ENCODE measurements at regions of chr2 and their contacts with region 1.

Region 1: GRCh38 chr2:3633089-3633981 is 24.7 kb upstream of the ALLC start:
- DNase-seq: peak; percentile 81
- ATAC-seq: peak; percentile 49
- H3K4me3 ChIP-seq: no peak overlapping the region
- H3K27ac ChIP-seq: no peak overlapping the region
- H3K4me1 ChIP-seq: peaks cover 2% of the 10 kb centered on the region; the same call in 1 of the 2 replicates
- H3K27me3 ChIP-seq: peaks cover 9% of the 10 kb centered on the region; the same call in 1 of the 2 replicates
- CTCF ChIP-seq: no peak
- POLR2A ChIP-seq: no peak
- RAD21 ChIP-seq: no peak

Region 2: GRCh38 chr2:3349211-3349693 is 284.1 kb before region 1 on chr2:
- CTCF ChIA-PET with region 1: no interaction called
- POLR2A ChIA-PET with region 1: no interaction called
- dilution Hi-C with region 1: no loop called
- in situ Hi-C with region 1: no loop called
- intact Hi-C with region 1: no loop called
- DNase-seq: peak; percentile 17
- ATAC-seq: peak; percentile 42; the same call in 1 of the 2 replicates
- H3K4me3 ChIP-seq: no peak overlapping the region
- H3K27ac ChIP-seq: no peak overlapping the region
- H3K4me1 ChIP-seq: peaks cover 2% of the 10 kb centered on the region; the same call in 1 of the 2 replicates
- H3K27me3 ChIP-seq: no peaks in the 10 kb centered on the region
- CTCF ChIP-seq: no peak
- POLR2A ChIP-seq: no peak
- RAD21 ChIP-seq: no peak

Region 3: DNA sequence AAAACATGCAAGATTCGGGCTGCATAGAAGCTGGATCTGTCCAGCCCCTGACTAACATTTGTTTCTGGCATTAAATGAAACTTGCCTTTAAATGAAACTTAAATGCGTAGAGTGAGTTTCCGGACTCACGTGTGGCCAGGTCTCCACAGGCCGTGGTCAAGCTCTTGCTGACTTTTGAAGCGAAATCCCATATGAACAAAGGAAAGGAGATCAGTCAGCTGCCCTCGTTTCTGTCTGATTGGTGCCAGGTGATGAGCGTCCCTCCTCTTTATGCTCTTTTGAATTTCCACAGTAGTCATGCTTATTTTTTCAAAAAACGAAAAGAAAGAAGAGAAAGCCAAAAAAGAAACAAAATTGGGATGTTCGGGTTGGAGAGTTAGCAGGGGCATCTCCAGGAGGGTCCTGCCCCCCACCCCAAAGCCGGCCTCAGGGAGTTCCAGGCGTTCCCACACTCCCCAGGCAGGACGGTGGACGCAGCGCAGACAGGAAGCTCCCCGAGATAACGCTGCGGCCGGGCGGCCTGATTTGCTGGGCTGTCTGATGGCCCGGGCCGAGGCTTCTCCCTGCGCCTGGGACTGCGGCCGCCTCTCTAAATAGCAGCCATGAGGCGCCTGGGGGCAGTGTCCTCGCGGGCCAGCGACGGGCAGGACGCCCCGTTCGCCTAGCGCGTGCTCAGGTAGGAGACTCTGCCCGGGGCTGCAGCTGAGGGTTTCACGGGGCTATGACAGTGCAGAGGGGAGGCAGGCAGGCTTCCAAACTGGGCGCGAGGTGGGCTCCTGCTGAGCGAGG is 38.6 kb before region 1 on chr2 and contains the start of gene COLEC11:
- CTCF ChIA-PET with region 1: no interaction called
- POLR2A ChIA-PET with region 1: no interaction called
- dilution Hi-C with region 1: no loop called
- in situ Hi-C with region 1: no loop called
- intact Hi-C with region 1: loop called (anchors 5 kb)
- DNase-seq: no peak
- ATAC-seq: peak; percentile 80
- H3K4me3 ChIP-seq: no peak within 1 kb of the TSS
- H3K27ac ChIP-seq: no peak within 1 kb of the TSS
- H3K4me1 ChIP-seq: peaks cover 3% of the 10 kb centered on the region; the same call in 1 of the 2 replicates
- H3K27me3 ChIP-seq: no peaks in the 10 kb centered on the region
- CTCF ChIP-seq: 0 out of 2 replicates have a peak, but pooled peaks have one; percentile 7
- POLR2A ChIP-seq: no peak
- RAD21 ChIP-seq: no peak
- total RNA-seq, gene COLEC11: under 0.01 and 0.28 TPM in 2 replicates